ENCODE measurements at regions of chr6 and their contacts with region 1.

Region 1: DNA sequence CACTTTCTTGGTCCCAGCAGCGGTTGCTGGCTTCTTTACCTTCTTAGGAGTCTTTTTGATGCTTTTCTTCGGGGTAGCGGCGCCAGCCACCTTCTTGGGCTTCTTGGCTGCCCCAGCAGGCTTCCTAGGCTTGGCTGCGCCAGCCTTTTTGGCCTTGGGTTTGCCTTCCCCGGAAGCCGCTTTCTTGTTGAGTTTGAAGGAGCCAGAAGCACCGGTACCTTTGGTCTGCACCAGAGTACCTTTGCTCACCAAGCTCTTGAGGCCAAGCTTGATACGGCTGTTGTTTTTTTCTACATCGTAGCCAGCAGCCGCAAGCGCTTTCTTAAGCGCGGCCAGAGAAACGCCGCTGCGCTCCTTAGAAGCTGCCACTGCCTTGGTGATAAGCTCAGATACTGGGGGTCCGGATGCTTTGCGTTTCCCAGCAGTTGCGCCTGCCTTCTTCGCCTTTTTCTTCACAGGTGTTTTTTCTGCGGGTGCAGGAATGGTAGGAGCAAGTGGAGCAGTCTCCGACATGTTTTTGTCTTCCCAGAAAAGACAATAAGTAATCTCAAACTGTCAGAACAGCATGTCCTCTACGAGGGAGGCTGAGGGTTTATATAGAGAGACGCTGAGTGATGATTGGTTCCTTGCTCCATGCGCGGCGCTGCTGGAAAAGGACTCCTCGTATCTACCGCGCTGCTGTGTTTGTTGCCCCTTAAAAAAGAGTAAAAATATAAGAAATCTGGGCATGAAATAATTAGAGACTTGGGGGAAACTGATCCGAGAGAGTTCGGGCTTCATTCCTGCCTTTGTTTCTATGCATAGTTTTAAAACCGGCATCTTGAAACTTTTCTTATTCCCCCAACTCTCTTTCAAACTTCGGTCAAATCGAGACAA is 130.3 kb upstream of the BTN3A2 start:
- DNase-seq: peak; percentile 86
- ATAC-seq: peak; percentile 65
- H3K4me3 Mint-ChIP-seq: peak overlapping the region; percentile 75
- H3K27ac Mint-ChIP-seq: peak overlapping the region; percentile 99
- H3K4me1 Mint-ChIP-seq: peaks cover 24% of the 10 kb centered on the region
- H3K27me3 Mint-ChIP-seq: peaks cover 5% of the 10 kb centered on the region
- CTCF ChIP-seq: no peak

Region 2: DNA sequence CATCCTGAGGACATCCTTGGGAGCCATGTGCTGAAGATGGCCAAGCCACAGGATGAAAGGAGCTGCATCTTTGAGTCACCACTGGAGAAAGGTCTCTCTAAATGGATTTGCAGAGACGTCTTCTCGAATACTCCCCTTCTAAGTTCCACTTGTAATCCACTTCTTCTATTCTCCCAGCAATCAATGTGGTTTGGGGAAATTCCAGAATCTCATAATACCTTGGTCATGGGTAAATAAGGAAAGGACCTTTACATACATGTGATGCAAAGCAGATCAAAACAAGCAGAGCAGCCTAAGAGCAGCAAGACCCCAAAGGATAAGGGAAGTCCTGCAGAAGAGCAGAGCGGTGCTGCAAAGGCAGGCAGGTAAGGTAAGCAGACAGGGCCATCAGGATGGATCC is 236.7 kb before region 1 on chr6:
- CTCF ChIA-PET with region 1: no interaction called
- POLR2A ChIA-PET with region 1: no interaction called
- intact Hi-C with region 1: no loop called
- DNase-seq: no peak
- ATAC-seq: no peak
- H3K4me3 Mint-ChIP-seq: no peak overlapping the region
- H3K27ac Mint-ChIP-seq: no peak overlapping the region
- H3K4me1 Mint-ChIP-seq: peaks cover 15% of the 10 kb centered on the region
- H3K27me3 Mint-ChIP-seq: no peaks in the 10 kb centered on the region
- CTCF ChIP-seq: no peak

Region 3: GRCh38 chr6:26031595-26032339 is 202.9 kb before region 1 on chr6:
- CTCF ChIA-PET with region 1: no interaction called
- POLR2A ChIA-PET with region 1: interaction called, 11 read pairs
- intact Hi-C with region 1: no loop called
- DNase-seq: peak; percentile 95
- ATAC-seq: peak; percentile 66
- H3K4me3 Mint-ChIP-seq: peak overlapping the region; percentile 91
- H3K27ac Mint-ChIP-seq: peak overlapping the region; percentile 98
- H3K4me1 Mint-ChIP-seq: peaks cover 50% of the 10 kb centered on the region
- H3K27me3 Mint-ChIP-seq: peaks cover 3% of the 10 kb centered on the region
- CTCF ChIP-seq: no peak

Region 4: GRCh38 chr6:26141378-26141904 is 93.2 kb before region 1 on chr6:
- CTCF ChIA-PET with region 1: no interaction called
- POLR2A ChIA-PET with region 1: no interaction called
- intact Hi-C with region 1: no loop called
- DNase-seq: no peak
- ATAC-seq: no peak
- H3K4me3 Mint-ChIP-seq: no peak overlapping the region
- H3K27ac Mint-ChIP-seq: no peak overlapping the region
- H3K4me1 Mint-ChIP-seq: no peaks in the 10 kb centered on the region
- H3K27me3 Mint-ChIP-seq: no peaks in the 10 kb centered on the region
- CTCF ChIP-seq: no peak

Region 5: GRCh38 chr6:26183581-26184366 is 50.9 kb before region 1 on chr6:
- CTCF ChIA-PET with region 1: interaction called, 7 read pairs
- POLR2A ChIA-PET with region 1: interaction called, 73 read pairs
- intact Hi-C with region 1: no loop called
- DNase-seq: peak; percentile 72
- ATAC-seq: peak; percentile 82
- H3K4me3 Mint-ChIP-seq: peak overlapping the region; percentile 76
- H3K27ac Mint-ChIP-seq: peak overlapping the region; percentile 84
- H3K4me1 Mint-ChIP-seq: peaks cover 38% of the 10 kb centered on the region
- H3K27me3 Mint-ChIP-seq: no peaks in the 10 kb centered on the region
- CTCF ChIP-seq: no peak

Region 6: DNA sequence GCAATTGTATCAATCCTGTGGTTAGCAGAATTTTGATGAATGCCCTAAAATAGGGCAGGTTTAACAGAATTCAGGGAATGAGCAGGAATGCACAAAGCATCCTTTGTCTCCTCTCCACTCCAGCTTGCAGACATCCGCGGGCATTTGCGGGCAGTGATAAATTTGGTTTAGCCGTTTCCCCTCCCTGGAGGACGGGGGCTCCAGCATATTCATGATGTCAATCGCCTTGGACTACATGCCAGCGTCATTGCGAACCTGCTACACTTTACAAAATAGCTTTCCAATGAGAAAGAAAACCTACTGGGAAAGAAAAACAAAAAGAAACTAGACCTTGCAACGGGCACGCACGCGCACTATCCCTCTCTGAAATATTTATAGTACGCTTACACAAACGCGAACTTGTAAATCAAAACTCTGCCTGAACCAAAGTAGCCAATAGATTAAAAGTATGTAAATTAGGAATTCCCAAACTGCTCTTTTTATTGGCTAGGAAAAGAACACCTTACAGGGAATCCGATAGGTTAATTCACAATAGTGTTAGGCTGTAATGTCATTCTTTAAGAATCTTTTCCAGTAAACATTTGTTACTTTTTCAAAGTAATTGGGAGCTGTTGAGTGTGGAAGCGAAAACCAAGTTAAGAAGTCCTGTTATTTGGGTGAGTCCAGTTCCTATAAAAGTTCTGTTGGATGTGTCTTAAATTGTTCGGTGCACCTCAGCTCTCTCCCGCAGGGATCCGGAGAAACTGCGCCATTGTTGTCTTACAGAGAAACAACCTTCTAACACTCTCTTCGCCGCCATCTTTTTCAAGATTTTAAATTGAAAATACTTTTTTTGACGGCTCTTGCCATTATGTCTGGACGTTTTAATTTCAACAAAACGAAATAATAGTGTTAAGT is 10.8 kb before region 1 on chr6:
- CTCF ChIA-PET with region 1: interaction called, 11 read pairs
- POLR2A ChIA-PET with region 1: interaction called, 197 read pairs
- intact Hi-C with region 1: no loop called
- DNase-seq: peak; percentile 77
- ATAC-seq: peak; percentile 82
- H3K4me3 Mint-ChIP-seq: no peak overlapping the region
- H3K27ac Mint-ChIP-seq: no peak overlapping the region
- H3K4me1 Mint-ChIP-seq: peaks cover 14% of the 10 kb centered on the region
- H3K27me3 Mint-ChIP-seq: no peaks in the 10 kb centered on the region
- CTCF ChIP-seq: no peak

Region 7: GRCh38 chr6:26270903-26271667 is 36.4 kb after region 1 on chr6:
- CTCF ChIA-PET with region 1: interaction called, 4 read pairs
- POLR2A ChIA-PET with region 1: interaction called, 203 read pairs
- intact Hi-C with region 1: no loop called
- DNase-seq: peak; percentile 87
- ATAC-seq: peak; percentile 43
- H3K4me3 Mint-ChIP-seq: no peak overlapping the region
- H3K27ac Mint-ChIP-seq: no peak overlapping the region
- H3K4me1 Mint-ChIP-seq: peaks cover 18% of the 10 kb centered on the region
- H3K27me3 Mint-ChIP-seq: no peaks in the 10 kb centered on the region
- CTCF ChIP-seq: no peak

Region 8: GRCh38 chr6:26411751-26412150 is 177.1 kb after region 1 on chr6:
- CTCF ChIA-PET with region 1: no interaction called
- POLR2A ChIA-PET with region 1: no interaction called
- intact Hi-C with region 1: no loop called
- DNase-seq: no peak
- ATAC-seq: no peak
- H3K4me3 Mint-ChIP-seq: no peak overlapping the region
- H3K27ac Mint-ChIP-seq: peak overlapping the region; percentile 23
- H3K4me1 Mint-ChIP-seq: peaks cover 20% of the 10 kb centered on the region
- H3K27me3 Mint-ChIP-seq: no peaks in the 10 kb centered on the region
- CTCF ChIP-seq: no peak

Region 9: DNA sequence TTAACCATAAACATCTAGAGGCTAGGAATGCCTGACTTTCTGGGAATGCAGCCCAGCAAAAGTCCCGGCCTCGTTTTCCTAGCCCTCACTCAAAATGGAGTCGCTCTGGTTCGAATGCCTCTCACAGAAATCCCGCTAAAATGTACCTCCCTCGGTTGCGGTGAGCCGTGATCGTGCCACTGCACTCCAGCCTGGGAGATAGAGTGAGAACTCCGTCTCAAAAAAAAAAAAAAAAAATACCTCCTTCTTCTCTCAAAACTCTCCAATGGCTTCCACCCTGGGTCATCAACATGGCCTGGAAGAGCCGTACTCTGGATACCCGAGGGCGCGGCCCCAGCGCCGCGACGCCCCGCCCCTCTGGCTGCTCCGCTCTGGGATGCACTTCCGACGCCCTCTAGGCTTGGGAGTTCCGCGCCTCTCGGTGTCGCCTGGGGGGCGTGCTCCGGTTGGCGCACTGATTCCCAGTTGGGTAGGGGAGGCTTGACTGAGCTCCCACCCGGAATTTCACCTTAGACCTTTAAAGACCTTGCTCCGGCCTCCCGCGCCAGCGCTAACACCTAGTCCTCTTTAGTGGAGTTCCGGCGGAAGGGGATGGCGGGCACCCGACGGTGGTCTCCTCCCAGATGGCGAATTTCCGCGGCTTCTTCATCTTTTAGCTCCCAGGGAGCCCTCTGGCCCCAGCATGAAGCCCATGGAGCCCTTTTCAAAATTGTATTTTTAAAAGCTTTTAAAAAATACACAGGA is 315.8 kb after region 1 on chr6:
- CTCF ChIA-PET with region 1: no interaction called
- POLR2A ChIA-PET with region 1: no interaction called
- intact Hi-C with region 1: no loop called
- DNase-seq: peak; percentile 72
- ATAC-seq: peak; percentile 42
- H3K4me3 Mint-ChIP-seq: peak overlapping the region; percentile 88
- H3K27ac Mint-ChIP-seq: peak overlapping the region; percentile 89
- H3K4me1 Mint-ChIP-seq: peaks cover 13% of the 10 kb centered on the region
- H3K27me3 Mint-ChIP-seq: no peaks in the 10 kb centered on the region
- CTCF ChIP-seq: no peak

Region 10: DNA sequence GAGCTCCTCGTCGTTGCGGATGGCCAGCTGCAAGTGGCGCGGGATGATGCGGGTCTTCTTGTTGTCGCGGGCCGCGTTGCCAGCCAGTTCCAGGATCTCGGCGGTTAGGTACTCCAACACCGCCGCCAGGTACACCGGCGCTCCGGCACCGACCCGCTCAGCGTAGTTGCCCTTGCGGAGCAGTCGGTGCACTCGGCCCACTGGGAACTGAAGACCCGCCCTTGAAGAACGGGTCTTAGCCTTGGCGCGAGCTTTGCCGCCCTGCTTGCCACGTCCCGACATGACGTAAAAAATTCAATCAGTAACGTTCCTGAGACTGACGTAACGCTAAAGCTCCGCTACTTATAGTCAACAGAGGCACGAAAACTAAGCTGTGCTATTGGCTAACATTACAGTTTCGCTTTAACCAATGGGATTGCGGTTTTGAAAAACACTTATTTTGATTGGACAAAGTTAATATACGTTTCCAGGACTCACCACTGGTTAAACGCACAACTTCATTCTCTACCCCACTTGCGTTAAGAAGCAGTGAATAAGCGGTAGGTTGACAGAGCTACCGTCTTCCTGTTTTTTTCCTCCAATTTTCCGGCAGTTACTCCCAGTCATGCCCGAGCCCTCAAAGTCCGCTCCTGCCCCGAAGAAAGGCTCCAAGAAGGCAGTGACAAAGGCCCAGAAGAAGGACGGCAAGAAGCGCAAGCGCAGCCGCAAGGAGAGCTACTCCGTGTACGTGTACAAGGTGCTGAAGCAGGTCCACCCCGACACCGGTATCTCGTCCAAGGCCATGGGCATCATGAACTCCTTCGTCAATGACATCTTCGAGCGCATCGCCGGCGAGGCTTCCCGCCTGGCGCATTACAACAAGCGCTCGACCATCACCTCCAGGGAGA is 1603.6 kb after region 1 on chr6:
- CTCF ChIA-PET with region 1: no interaction called
- POLR2A ChIA-PET with region 1: interaction called, 12 read pairs
- intact Hi-C with region 1: no loop called
- DNase-seq: peak; percentile 87
- ATAC-seq: peak; percentile 73
- H3K4me3 Mint-ChIP-seq: no peak overlapping the region
- H3K27ac Mint-ChIP-seq: no peak overlapping the region
- H3K4me1 Mint-ChIP-seq: peaks cover 20% of the 10 kb centered on the region
- H3K27me3 Mint-ChIP-seq: no peaks in the 10 kb centered on the region
- CTCF ChIP-seq: no peak